Heart right ventricle (tissue), 16 donors: ENCODE measurements at regions of chr12 and their contacts with region 1.

Region 1: DNA sequence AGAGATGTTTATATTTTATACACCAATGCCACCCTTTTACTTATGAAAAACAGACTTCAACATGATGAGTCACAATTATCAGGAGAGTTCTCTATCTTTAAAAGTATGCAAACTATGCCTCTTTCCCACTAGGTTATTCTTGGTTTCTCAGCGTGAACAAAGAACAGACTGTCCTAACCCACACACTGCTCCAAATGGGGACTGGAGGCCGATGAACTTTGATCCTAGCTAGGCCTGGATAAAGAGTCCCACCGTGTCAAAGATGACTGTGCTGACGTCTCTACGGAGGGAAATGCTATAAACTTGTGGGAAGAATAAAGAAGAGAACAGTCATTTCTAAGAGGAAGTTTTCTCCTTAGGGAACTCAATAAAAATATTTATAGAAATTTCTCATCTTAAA is 160.1 kb downstream of the EPS8 start:
- DNase-seq: peak; percentile 14 to 82
- ATAC-seq: peak; percentile 91 to 98 (median 97)
- H3K4me3 ChIP-seq: no peak overlapping the region
- H3K27ac ChIP-seq: peak overlapping the region in 9 of 10 donors; percentile 61 to 87 (median 81)
- H3K4me1 ChIP-seq: peaks cover 0 to 61% (median 37%) of the 10 kb centered on the region in 9 donors
- H3K27me3 ChIP-seq: no peaks in the 10 kb centered on the region
- CTCF ChIP-seq: no peak

Region 2: DNA sequence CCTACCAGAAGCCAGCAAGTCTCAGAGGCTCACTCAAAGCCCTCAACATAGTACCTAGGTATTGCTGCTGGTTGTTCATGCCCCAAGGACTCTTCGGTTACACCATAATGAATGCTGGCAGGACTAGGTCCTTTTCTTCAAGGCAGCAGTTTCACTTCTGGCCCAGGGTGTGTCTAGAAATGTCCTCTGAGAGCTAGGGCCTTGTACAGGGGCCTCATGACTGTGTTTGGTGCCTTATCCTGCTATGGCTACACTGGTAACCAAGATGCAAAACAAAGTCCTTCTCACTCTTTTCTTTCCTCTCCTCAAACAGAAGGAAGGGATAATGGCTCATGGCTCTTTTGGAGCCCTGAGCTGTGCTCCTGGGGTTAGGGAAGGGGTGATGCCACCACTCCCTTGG is 322.0 kb before region 1 on chr12:
- intact Hi-C with region 1: no loop called
- DNase-seq: no peak
- ATAC-seq: no peak
- H3K4me3 ChIP-seq: no peak overlapping the region
- H3K27ac ChIP-seq: no peak overlapping the region
- H3K4me1 ChIP-seq: no peaks in the 10 kb centered on the region
- H3K27me3 ChIP-seq: no peaks in the 10 kb centered on the region
- CTCF ChIP-seq: no peak

Region 3: GRCh38 chr12:15772405-15773018 is 143.4 kb after region 1 on chr12:
- intact Hi-C with region 1: loop called in 1 of 10 experiments (anchors 10 kb)
- DNase-seq: no peak
- ATAC-seq: peak in 1 of 8 donors; percentile 26
- H3K4me3 ChIP-seq: no peak overlapping the region
- H3K27ac ChIP-seq: peak overlapping the region in 2 of 10 donors; percentile 20 to 51
- H3K4me1 ChIP-seq: peaks cover 0 to 60% (median 14%) of the 10 kb centered on the region in 9 donors
- H3K27me3 ChIP-seq: no peaks in the 10 kb centered on the region
- CTCF ChIP-seq: peak in 8 of 9 donors; percentile 8 to 63 (median 50)